ENCODE measurements at regions of chr1 and their contacts with region 1.

Region 1: DNA sequence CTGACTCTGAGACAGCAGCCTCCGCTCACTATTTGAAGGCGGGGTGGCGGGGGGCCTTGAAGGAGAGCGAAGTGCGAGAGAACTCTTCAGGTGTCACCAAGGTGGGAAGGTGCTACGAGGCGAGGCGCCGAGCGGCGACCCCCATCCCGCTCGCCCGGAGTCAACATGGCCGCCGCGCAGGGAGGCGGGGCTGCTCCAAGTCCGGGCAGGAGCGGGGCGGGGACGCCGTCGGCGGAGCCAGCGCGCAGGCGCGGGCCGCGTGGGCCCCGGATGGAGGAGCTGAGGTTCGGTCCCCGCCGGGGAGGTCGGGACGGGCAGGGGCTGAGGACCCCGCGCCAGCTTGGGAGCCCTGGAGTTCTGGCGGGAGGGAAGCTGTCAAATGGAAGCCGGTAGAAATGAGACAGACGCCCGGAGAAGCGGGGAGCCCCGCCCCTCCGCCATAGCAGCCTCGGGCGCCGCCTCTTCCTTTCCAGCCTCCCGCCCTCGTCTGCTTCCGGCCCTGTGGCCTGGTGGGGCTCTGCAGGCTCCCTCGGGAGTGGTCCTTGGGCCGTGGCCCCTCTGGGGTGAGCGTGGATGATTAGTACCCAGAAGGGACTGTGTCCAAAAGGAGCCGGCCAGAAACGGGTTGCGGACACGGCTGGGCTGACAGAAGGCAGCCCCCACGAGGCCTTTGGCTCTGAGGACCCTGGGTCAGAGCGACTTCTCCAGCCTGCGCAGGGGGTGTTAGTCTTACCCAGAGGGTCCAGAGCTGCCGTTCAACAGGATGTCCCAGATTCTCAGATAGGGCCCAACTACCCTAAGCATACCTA is at the start of gene PIGV:
- DNase-seq: peak; percentile 91
- ATAC-seq: peak; percentile 70
- H3K4me3 Mint-ChIP-seq: peak within 1 kb of the TSS; percentile 84
- H3K27ac Mint-ChIP-seq: peak within 1 kb of the TSS; percentile 100
- H3K4me1 Mint-ChIP-seq: peaks cover 84% of the 10 kb centered on the region
- H3K27me3 Mint-ChIP-seq: no peaks in the 10 kb centered on the region
- total RNA-seq, gene PIGV: 19.9 to 20.3 TPM

Region 2: DNA sequence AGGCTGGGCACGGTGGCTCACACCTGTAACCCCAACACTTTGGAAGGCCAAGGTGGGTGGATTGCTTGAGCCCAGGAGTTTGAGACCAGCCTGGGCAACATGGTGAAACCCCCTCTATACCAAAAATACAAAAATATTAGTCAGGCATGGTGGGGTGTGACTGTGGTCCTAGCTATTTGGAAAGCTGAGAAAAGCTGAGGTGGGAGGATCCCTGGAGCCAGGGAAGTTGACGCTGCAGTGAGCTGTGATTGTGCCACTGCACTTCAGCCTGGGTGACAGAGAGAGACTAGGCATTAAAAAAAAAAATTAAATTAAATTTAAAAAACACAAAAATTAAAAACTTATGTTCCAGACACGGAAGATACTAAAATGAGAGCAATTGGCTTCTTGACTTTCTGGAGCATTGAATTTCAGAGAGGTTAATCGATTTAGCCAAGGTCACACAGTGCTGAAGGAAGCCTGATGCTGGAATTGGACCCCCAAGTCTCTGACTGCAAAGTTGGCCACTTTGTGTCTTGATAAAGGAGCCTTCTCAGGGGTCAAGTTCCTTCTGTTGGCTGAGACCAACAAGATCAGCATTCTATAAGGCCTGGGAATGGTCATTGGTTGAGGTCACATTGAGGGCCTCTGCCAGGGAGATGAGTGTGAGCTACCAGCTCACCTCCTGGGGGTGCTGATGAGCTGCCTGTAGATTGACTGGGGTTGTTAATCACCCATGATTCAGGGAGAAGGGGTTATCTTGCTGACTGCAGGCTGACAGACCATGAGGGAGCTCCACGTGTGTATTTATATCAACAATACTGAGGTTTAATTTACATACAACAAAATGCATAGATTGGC is 204.0 kb before region 1 on chr1:
- CTCF ChIA-PET with region 1: interaction called, 42 read pairs
- POLR2A ChIA-PET with region 1: interaction called, 3 read pairs
- DNase-seq: no peak
- ATAC-seq: peak; percentile 43
- H3K4me3 Mint-ChIP-seq: no peak overlapping the region
- H3K27ac Mint-ChIP-seq: no peak overlapping the region
- H3K4me1 Mint-ChIP-seq: peaks cover 24% of the 10 kb centered on the region
- H3K27me3 Mint-ChIP-seq: no peaks in the 10 kb centered on the region

Region 3: DNA sequence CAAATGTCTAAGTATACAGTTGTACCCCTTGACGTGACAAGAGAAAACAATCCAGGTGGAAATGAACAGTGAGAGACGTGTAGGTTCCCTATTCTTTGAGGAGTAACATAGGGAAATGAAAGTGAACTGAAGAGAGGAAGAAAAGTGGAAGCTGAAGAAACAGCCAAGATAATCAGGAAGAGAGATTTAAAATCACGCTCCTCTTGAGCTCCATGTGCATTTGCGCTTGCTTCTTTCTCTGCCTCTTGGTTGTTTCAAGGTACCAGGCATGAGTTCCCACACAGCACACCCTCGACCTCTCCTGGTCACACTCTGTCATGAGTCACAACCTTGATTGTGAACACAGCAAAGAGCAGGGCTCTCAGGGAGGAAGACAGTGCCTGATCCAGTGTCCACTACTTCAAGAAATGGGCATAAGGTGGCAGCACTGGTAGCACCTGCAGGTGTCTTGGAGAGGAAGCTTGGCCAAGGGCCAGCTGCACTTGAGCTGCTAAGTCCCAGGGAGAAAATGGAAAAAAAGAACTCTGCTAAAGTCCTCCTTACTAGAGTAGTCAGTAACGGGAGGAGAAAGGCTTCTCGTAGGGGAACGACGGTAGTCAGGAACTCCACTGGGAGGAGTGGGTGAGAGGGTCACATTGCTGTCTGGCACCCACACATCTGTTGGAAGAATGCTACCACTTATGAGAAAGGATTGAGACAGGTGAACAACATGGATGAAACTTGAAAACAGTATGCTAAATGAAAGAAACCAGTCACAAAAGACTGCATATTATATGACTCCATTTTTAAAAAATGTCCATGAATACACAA is 110.4 kb before region 1 on chr1:
- CTCF ChIA-PET with region 1: interaction called, 42 read pairs
- POLR2A ChIA-PET with region 1: interaction called, 7 read pairs
- DNase-seq: peak; percentile 66
- ATAC-seq: peak; percentile 96
- H3K4me3 Mint-ChIP-seq: no peak overlapping the region
- H3K27ac Mint-ChIP-seq: peak overlapping the region; percentile 47
- H3K4me1 Mint-ChIP-seq: peaks cover 21% of the 10 kb centered on the region
- H3K27me3 Mint-ChIP-seq: peaks cover 2% of the 10 kb centered on the region

Region 4: GRCh38 chr1:26728645-26729044 is 59.3 kb before region 1 on chr1:
- CTCF ChIA-PET with region 1: interaction called, 33 read pairs
- POLR2A ChIA-PET with region 1: interaction called, 7 read pairs
- DNase-seq: no peak
- ATAC-seq: no peak
- H3K4me3 Mint-ChIP-seq: no peak overlapping the region
- H3K27ac Mint-ChIP-seq: peak overlapping the region; percentile 35
- H3K4me1 Mint-ChIP-seq: peaks cover 72% of the 10 kb centered on the region
- H3K27me3 Mint-ChIP-seq: no peaks in the 10 kb centered on the region

Region 5: GRCh38 chr1:26811057-26811456 is 23.1 kb after region 1 on chr1:
- CTCF ChIA-PET with region 1: interaction called, 56 read pairs
- POLR2A ChIA-PET with region 1: interaction called, 12 read pairs
- DNase-seq: no peak
- ATAC-seq: no peak
- H3K4me3 Mint-ChIP-seq: no peak overlapping the region
- H3K27ac Mint-ChIP-seq: peak overlapping the region; percentile 74
- H3K4me1 Mint-ChIP-seq: peaks cover 21% of the 10 kb centered on the region
- H3K27me3 Mint-ChIP-seq: no peaks in the 10 kb centered on the region

Region 6: GRCh38 chr1:26864610-26865527 is 77.0 kb after region 1 on chr1:
- CTCF ChIA-PET with region 1: interaction called, 33 read pairs
- POLR2A ChIA-PET with region 1: interaction called, 37 read pairs
- DNase-seq: peak; percentile 96
- ATAC-seq: peak; percentile 97
- H3K4me3 Mint-ChIP-seq: peak overlapping the region; percentile 94
- H3K27ac Mint-ChIP-seq: peak overlapping the region; percentile 97
- H3K4me1 Mint-ChIP-seq: peaks cover 40% of the 10 kb centered on the region
- H3K27me3 Mint-ChIP-seq: no peaks in the 10 kb centered on the region

Measured in activated CD8-positive, alpha-beta T cell treated with anti-CD3 and anti-CD28 coated beads, Interleukin-2, amount 10 ng/mL, durations not matched to agents 7 days and 5 days (primary cell).